ENCODE measurements at regions of chr16 and their contacts with region 1.

Region 1: DNA sequence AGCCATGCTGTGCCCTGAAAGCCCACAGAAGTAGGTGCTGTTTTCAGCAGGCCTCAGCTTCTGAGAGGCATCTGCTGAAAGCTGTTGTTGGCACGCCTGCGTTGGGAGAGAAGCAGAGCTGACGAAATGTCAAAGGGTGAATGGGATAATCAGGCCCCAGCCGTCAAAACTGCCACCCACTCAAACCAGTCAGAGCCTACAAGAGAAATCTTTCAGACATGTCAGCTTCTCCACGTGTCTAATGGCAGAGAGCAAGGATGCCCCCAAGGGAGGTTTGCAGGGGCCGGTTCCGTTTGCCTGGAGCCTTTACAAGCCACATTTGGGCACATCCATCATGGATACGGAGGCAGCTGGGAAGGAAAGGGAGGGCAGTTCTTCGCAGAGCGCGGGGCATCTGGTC is 568.2 kb upstream of the EEF2KMT start:
- DNase-seq: no peak
- H3K4me3 ChIP-seq: no peak overlapping the region
- H3K27ac ChIP-seq: no peak overlapping the region
- H3K4me1 ChIP-seq: no peaks in the 10 kb centered on the region
- H3K27me3 ChIP-seq: no peaks in the 10 kb centered on the region
- CTCF ChIP-seq: no peak

Region 2: GRCh38 chr16:5234295-5235050 is 431.4 kb before region 1 on chr16:
- dilution Hi-C with region 1: no loop called
- DNase-seq: no peak
- H3K4me3 ChIP-seq: no peak overlapping the region
- H3K27ac ChIP-seq: no peak overlapping the region
- H3K4me1 ChIP-seq: no peaks in the 10 kb centered on the region
- H3K27me3 ChIP-seq: no peaks in the 10 kb centered on the region
- CTCF ChIP-seq: no peak

Region 3: GRCh38 chr16:5715155-5715554 is 49.3 kb after region 1 on chr16:
- dilution Hi-C with region 1: loop called (anchors 5 kb)
- DNase-seq: no peak
- H3K4me3 ChIP-seq: no peak overlapping the region
- H3K27ac ChIP-seq: no peak overlapping the region
- H3K4me1 ChIP-seq: no peaks in the 10 kb centered on the region
- H3K27me3 ChIP-seq: no peaks in the 10 kb centered on the region
- CTCF ChIP-seq: no peak

Region 4: GRCh38 chr16:5768445-5768844 is 102.6 kb after region 1 on chr16:
- dilution Hi-C with region 1: no loop called
- DNase-seq: no peak
- H3K4me3 ChIP-seq: no peak overlapping the region
- H3K27ac ChIP-seq: no peak overlapping the region
- H3K4me1 ChIP-seq: no peaks in the 10 kb centered on the region
- H3K27me3 ChIP-seq: no peaks in the 10 kb centered on the region
- CTCF ChIP-seq: no peak